Prostate gland (tissue), 2 donors: ENCODE measurements at regions of chr3 and their contacts with region 1.

Region 1: DNA sequence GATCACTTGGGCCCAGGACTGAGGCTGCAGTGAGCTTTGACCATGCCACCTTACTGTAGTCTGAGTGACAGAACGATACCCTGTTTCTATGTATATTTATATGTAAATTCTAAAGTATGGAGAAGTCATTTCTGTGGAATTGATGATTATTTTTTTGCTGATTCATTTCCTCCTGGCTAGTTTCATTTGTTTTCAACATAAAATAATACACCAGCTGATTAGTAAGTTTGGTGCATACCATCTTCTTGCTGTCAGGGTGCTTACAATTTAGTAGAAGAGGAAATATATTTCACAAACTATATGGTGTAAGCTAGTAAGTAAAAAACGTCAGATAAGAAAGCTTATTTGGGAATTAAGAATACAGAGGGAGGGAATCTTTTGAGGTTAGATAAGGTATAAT is 36.0 kb downstream of the SLC25A26 start:
- DNase-seq: no peak
- H3K4me3 ChIP-seq: no peak overlapping the region
- H3K27ac ChIP-seq: no peak overlapping the region
- H3K4me1 ChIP-seq: no peaks in the 10 kb centered on the region
- H3K27me3 ChIP-seq: no peaks in the 10 kb centered on the region
- CTCF ChIP-seq: no peak
- POLR2A ChIP-seq: no peak

Region 2: DNA sequence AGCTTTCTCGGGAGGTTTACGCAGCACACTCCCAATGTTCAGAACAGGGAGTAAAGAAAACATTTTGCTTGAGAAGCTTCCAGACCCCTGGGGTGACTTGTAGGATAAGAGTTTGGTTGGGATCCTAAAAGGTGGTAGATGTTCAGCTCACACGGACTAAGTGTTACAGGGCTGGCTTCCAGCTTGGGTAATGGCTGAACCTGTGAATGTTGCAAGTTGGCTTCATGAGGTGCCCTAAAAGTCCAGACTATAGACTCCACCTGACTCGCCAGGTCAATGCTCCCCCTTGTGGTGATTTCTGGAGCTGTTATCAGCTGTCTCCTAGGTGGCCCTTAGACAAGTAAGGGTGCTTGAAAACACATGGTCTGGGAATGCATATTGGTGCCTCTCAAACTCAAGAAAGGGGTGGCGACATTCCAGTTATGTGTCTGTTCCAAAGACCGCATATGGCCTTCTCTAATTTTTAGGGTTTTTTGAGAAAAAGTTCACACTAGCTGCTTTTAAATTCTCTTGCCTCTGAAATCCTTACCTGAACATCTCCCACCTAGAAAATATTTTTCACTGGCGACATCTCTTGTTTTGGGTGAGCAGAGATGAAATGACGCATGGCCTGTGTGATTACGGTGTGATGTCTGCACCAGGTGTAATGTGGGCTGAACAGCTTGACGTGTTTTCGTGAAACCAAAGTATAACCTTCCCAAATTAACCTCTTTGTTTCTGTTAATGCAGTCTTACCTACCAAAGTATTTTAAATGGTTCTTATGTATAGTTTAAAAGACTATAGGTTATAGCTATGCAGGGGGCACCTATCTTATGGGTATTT is 565.6 kb after region 1 on chr3:
- intact Hi-C with region 1: loop called (anchors 5 kb)
- DNase-seq: peak; percentile 70
- H3K4me3 ChIP-seq: no peak overlapping the region
- H3K27ac ChIP-seq: no peak overlapping the region
- H3K4me1 ChIP-seq: no peaks in the 10 kb centered on the region
- H3K27me3 ChIP-seq: no peaks in the 10 kb centered on the region
- CTCF ChIP-seq: peak; percentile 47 to 75 (median 71)
- POLR2A ChIP-seq: no peak